ENCODE measurements at regions of chr11 and their contacts with region 1.

Region 1: GRCh38 chr11:3412837-3413236 is 33.9 kb upstream of the ZNF195 start:
- DNase-seq: no peak
- H3K4me3 ChIP-seq: no peak overlapping the region
- H3K27ac ChIP-seq: no peak overlapping the region
- H3K4me1 ChIP-seq: no peaks in the 10 kb centered on the region
- H3K27me3 ChIP-seq: no peaks in the 10 kb centered on the region

Region 2: GRCh38 chr11:3341298-3341697 is 71.5 kb before region 1 on chr11:
- CTCF ChIA-PET with region 1: interaction called, 53 read pairs
- POLR2A ChIA-PET with region 1: interaction called, 3 read pairs
- DNase-seq: peak; percentile 48 to 73 (median 62)
- H3K4me3 ChIP-seq: no peak overlapping the region
- H3K27ac ChIP-seq: no peak overlapping the region
- H3K4me1 ChIP-seq: no peaks in the 10 kb centered on the region
- H3K27me3 ChIP-seq: peaks cover 0 to 14% (median 6%) of the 10 kb centered on the region in 5 experiments

Region 3: GRCh38 chr11:3378426-3379423 is 34.1 kb before region 1 on chr11 and contains the start of gene ZNF195:
- CTCF ChIA-PET with region 1: interaction called, 19 read pairs
- POLR2A ChIA-PET with region 1: no interaction called
- DNase-seq: peak; percentile 97 to 98 (median 98)
- H3K4me3 ChIP-seq: peak within 1 kb of the TSS; percentile 81 to 95 (median 89)
- H3K27ac ChIP-seq: peak within 1 kb of the TSS; percentile 85 to 93
- H3K4me1 ChIP-seq: peaks cover 0 to 20% (median 6%) of the 10 kb centered on the region in 4 experiments
- H3K27me3 ChIP-seq: no peaks in the 10 kb centered on the region

Measured in common myeloid progenitor, CD34-positive (primary cell).